T-cell (primary cell): ENCODE measurements at regions of chr9 and their contacts with region 1.

Region 1: GRCh38 chr9:97411789-97412625 is at the start of gene TDRD7:
- DNase-seq: peak; percentile 76 to 98 (median 87)
- ATAC-seq: peak; percentile 84 to 94 (median 88)
- H3K4me3 ChIP-seq: peak within 1 kb of the TSS; percentile 73 to 74
- H3K4me3 Mint-ChIP-seq: peak within 1 kb of the TSS; percentile 84 to 89 (median 87)
- H3K27ac ChIP-seq: peak within 1 kb of the TSS; percentile 56
- H3K27ac Mint-ChIP-seq: peak within 1 kb of the TSS; percentile 81 to 86
- H3K4me1 ChIP-seq: peaks cover 3 to 14% of the 10 kb centered on the region in 2 experiments
- H3K4me1 Mint-ChIP-seq: peaks cover 27 to 41% (median 38%) of the 10 kb centered on the region in 3 donors
- H3K27me3 ChIP-seq: no peaks in the 10 kb centered on the region
- H3K27me3 Mint-ChIP-seq: peaks cover 17 to 19% of the 10 kb centered on the region in 2 donors
- total RNA-seq, gene TDRD7: 9.2 to 11.9 (median 10.2) TPM

Region 2: GRCh38 chr9:97518909-97519307 is 106.9 kb after region 1 on chr9:
- CTCF ChIA-PET with region 1: no interaction called
- POLR2A ChIA-PET with region 1: no interaction called
- DNase-seq: no peak
- ATAC-seq: no peak
- H3K4me3 ChIP-seq: no peak overlapping the region
- H3K4me3 Mint-ChIP-seq: no peak overlapping the region
- H3K27ac ChIP-seq: no peak overlapping the region
- H3K27ac Mint-ChIP-seq: no peak overlapping the region
- H3K4me1 ChIP-seq: no peaks in the 10 kb centered on the region
- H3K4me1 Mint-ChIP-seq: peaks cover 0 to 5% (median 3%) of the 10 kb centered on the region in 3 donors
- H3K27me3 ChIP-seq: peaks cover 0 to 38% of the 10 kb centered on the region in 2 experiments
- H3K27me3 Mint-ChIP-seq: peaks cover 31 to 38% of the 10 kb centered on the region in 2 donors

Region 3: GRCh38 chr9:97598461-97599288 is 186.7 kb after region 1 on chr9:
- CTCF ChIA-PET with region 1: interaction called, 3 to 11 read pairs
- POLR2A ChIA-PET with region 1: interaction called in 1 of 2 experiments, 4 read pairs
- DNase-seq: peak; percentile 32 to 84 (median 63)
- ATAC-seq: peak; percentile 86 to 97 (median 92)
- H3K4me3 ChIP-seq: peak overlapping the region in 1 of 2 donors; percentile 10
- H3K4me3 Mint-ChIP-seq: peak overlapping the region in 2 of 3 donors; percentile 41 to 44
- H3K27ac ChIP-seq: no peak overlapping the region
- H3K27ac Mint-ChIP-seq: peak overlapping the region in 1 of 2 donors; percentile 15
- H3K4me1 ChIP-seq: peaks cover 0 to 7% of the 10 kb centered on the region in 2 experiments
- H3K4me1 Mint-ChIP-seq: peaks cover 7 to 8% (median 7%) of the 10 kb centered on the region in 3 donors
- H3K27me3 ChIP-seq: peaks cover 0 to 2% of the 10 kb centered on the region in 2 experiments
- H3K27me3 Mint-ChIP-seq: peaks cover 0 to 2% of the 10 kb centered on the region in 2 donors

Region 4: GRCh38 chr9:97615439-97616072 is 203.5 kb after region 1 on chr9:
- CTCF ChIA-PET with region 1: interaction called, 3 to 20 read pairs
- POLR2A ChIA-PET with region 1: no interaction called
- DNase-seq: peak in 32 of 35 experiments; percentile 7 to 78 (median 38)
- ATAC-seq: peak in 2 of 4 experiments; percentile 52 to 55
- H3K4me3 ChIP-seq: no peak overlapping the region
- H3K4me3 Mint-ChIP-seq: no peak overlapping the region
- H3K27ac ChIP-seq: no peak overlapping the region
- H3K27ac Mint-ChIP-seq: no peak overlapping the region
- H3K4me1 ChIP-seq: no peaks in the 10 kb centered on the region
- H3K4me1 Mint-ChIP-seq: peaks cover 0 to 5% (median 0%) of the 10 kb centered on the region in 3 donors
- H3K27me3 ChIP-seq: no peaks in the 10 kb centered on the region
- H3K27me3 Mint-ChIP-seq: no peaks in the 10 kb centered on the region

Region 5: DNA sequence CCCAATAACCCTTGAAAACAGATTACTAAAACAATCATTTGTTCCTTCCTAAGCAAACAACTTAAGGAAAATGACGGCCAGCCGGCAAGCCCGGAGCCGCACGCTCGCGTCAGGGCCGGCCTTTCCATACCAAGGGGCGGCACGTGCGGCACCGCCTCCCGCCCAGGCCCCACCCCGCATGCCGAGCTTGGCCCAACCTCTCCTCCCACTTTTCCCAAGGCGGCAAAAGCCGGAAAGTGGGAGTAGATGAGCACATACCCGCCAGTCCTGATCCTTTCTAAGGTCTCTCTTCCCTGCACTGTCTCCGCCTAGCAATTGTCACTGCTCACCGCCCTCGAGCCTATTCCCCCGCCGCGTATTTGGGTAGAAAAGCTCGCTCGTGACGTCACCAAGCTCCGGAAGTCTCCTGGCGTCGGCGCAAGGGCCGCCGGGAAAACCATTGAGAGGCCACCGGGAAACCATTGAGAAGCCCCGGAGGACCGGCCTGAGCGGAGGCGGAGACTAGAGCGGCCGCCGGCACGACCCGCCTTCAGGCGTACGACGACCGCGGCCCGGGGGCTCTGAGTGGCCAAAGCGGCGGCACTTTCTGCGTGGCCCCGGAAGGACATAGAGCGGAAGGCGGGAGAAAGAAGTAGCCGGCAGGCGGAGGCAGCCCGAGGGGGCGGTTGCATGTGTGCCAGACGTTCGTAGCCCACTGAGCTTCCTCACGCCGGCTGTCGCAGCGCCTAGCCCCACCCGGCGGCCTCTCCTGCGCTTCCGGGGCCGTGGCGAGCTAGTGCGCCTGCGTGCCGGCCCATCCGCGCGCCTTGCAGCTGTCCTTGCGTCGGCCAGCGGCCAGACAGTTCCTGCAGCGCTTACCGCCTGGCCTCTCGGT is 221.2 kb after region 1 on chr9 and contains the starts of genes NCBP1 and TSTD2:
- CTCF ChIA-PET with region 1: interaction called in 1 of 2 experiments, 16 read pairs
- POLR2A ChIA-PET with region 1: interaction called in 1 of 2 experiments, 7 read pairs
- DNase-seq: peak; percentile 89 to 98 (median 95)
- ATAC-seq: peak; percentile 86 to 91 (median 90)
- H3K4me3 ChIP-seq: peak within 1 kb of the TSS; percentile 59 to 75
- H3K4me3 Mint-ChIP-seq: peak within 1 kb of the TSS; percentile 97 to 99 (median 98)
- H3K27ac ChIP-seq: peak within 1 kb of the TSS; percentile 88
- H3K27ac Mint-ChIP-seq: peak within 1 kb of the TSS; percentile 97 to 100
- H3K4me1 ChIP-seq: peaks cover 21 to 27% of the 10 kb centered on the region in 2 experiments
- H3K4me1 Mint-ChIP-seq: peaks cover 66 to 68% (median 68%) of the 10 kb centered on the region in 3 donors
- H3K27me3 ChIP-seq: no peaks in the 10 kb centered on the region
- H3K27me3 Mint-ChIP-seq: no peaks in the 10 kb centered on the region
- total RNA-seq, gene NCBP1: 31.9 to 38.7 (median 33.8) TPM
- total RNA-seq, gene TSTD2: 15.4 to 24.0 (median 17.9) TPM